GM12878 (cell line): ENCODE measurements at regions of chr10 and their contacts with region 1.

Region 1: GRCh38 chr10:45420453-45421192 is 46.6 kb downstream of the ALOX5 start:
- DNase-seq: peak; percentile 90
- ATAC-seq: peak; percentile 82
- H3K4me3 ChIP-seq: peak overlapping the region; percentile 72
- H3K27ac ChIP-seq: peak overlapping the region; percentile 93
- H3K4me1 ChIP-seq: peaks cover 34% of the 10 kb centered on the region
- H3K27me3 ChIP-seq: no peaks in the 10 kb centered on the region
- CTCF ChIP-seq: no peak
- EP300 ChIP-seq: peak; percentile 66 to 69; a peak in 2 of 4 replicates
- POLR2A ChIP-seq: peak; percentile 46; the same call in 1 of the 2 replicates
- RAD21 ChIP-seq: no peak

Region 2: GRCh38 chr10:45111509-45111908 is 309.1 kb before region 1 on chr10:
- CTCF ChIA-PET with region 1: no interaction called
- POLR2A ChIA-PET with region 1: no interaction called
- RAD21 ChIA-PET with region 1: no interaction called
- SMC1A ChIA-PET with region 1: no interaction called
- in situ Hi-C with region 1: no loop called
- intact Hi-C with region 1: no loop called
- DNase-seq: no peak
- ATAC-seq: no peak
- H3K4me3 ChIP-seq: no peak overlapping the region
- H3K27ac ChIP-seq: no peak overlapping the region
- H3K4me1 ChIP-seq: no peaks in the 10 kb centered on the region
- H3K27me3 ChIP-seq: no peaks in the 10 kb centered on the region
- CTCF ChIP-seq: no peak
- EP300 ChIP-seq: no peak
- POLR2A ChIP-seq: no peak
- RAD21 ChIP-seq: no peak

Region 3: DNA sequence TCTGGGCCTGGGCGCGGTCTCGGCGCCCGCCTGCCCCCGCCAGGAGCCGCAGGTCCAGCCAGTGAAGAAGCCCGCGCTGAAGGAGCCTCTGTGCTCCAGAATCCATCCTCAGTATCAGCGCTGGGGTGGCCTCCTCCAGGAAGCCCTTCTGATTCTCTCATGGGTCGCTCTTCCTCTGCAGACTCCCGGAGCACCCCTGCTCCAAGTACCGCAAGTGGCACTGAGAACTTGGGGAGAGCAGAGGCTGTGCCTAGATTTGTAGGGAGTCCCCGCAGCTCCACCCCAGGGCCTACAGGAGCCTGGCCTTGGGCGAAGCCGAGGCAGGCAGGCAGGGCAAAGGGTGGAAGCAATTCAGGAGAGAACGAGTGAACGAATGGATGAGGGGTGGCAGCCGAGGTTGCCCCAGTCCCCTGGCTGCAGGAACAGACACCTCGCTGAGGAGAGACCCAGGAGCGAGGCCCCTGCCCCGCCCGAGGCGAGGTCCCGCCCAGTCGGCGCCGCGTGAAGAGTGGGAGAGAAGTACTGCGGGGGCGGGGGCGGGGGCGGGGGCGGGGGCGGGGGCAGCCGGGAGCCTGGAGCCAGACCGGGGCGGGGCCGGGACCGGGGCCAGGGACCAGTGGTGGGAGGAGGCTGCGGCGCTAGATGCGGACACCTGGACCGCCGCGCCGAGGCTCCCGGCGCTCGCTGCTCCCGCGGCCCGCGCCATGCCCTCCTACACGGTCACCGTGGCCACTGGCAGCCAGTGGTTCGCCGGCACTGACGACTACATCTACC is 46.9 kb before region 1 on chr10 and contains the start of gene ALOX5:
- CTCF ChIA-PET with region 1: no interaction called
- POLR2A ChIA-PET with region 1: no interaction called
- RAD21 ChIA-PET with region 1: no interaction called
- SMC1A ChIA-PET with region 1: no interaction called
- in situ Hi-C with region 1: no loop called
- intact Hi-C with region 1: loop called (anchors 1 kb)
- DNase-seq: no peak
- ATAC-seq: peak; percentile 63
- H3K4me3 ChIP-seq: peak within 1 kb of the TSS; percentile 81
- H3K27ac ChIP-seq: peak within 1 kb of the TSS; percentile 74
- H3K4me1 ChIP-seq: peaks cover 33% of the 10 kb centered on the region
- H3K27me3 ChIP-seq: no peaks in the 10 kb centered on the region
- CTCF ChIP-seq: no peak
- EP300 ChIP-seq: no peak
- POLR2A ChIP-seq: peak; percentile 49
- RAD21 ChIP-seq: no peak
- polyA plus RNA-seq, gene ALOX5: 3.3 to 6.5 TPM

Region 4: GRCh38 chr10:45408421-45409319 is 12.0 kb before region 1 on chr10:
- CTCF ChIA-PET with region 1: no interaction called
- POLR2A ChIA-PET with region 1: no interaction called
- RAD21 ChIA-PET with region 1: no interaction called
- SMC1A ChIA-PET with region 1: no interaction called
- in situ Hi-C with region 1: no loop called
- intact Hi-C with region 1: no loop called
- DNase-seq: no peak
- ATAC-seq: no peak; the same call in 2 of the 3 replicates
- H3K4me3 ChIP-seq: no peak overlapping the region
- H3K27ac ChIP-seq: no peak overlapping the region
- H3K4me1 ChIP-seq: peaks cover 4% of the 10 kb centered on the region; the same call in 1 of the 2 replicates
- H3K27me3 ChIP-seq: peaks cover 0 to 1% of the 10 kb centered on the region in 2 experiments; a peak in 2 of 4 replicates
- CTCF ChIP-seq: no peak
- EP300 ChIP-seq: no peak
- POLR2A ChIP-seq: no peak
- RAD21 ChIP-seq: no peak

Region 5: GRCh38 chr10:45442662-45443061 is 22.0 kb after region 1 on chr10:
- CTCF ChIA-PET with region 1: no interaction called
- POLR2A ChIA-PET with region 1: no interaction called
- RAD21 ChIA-PET with region 1: no interaction called
- SMC1A ChIA-PET with region 1: no interaction called
- in situ Hi-C with region 1: no loop called
- intact Hi-C with region 1: no loop called
- DNase-seq: no peak
- ATAC-seq: peak; percentile 47
- H3K4me3 ChIP-seq: no peak overlapping the region
- H3K27ac ChIP-seq: no peak overlapping the region
- H3K4me1 ChIP-seq: no peaks in the 10 kb centered on the region
- H3K27me3 ChIP-seq: no peaks in the 10 kb centered on the region
- CTCF ChIP-seq: no peak
- EP300 ChIP-seq: no peak
- POLR2A ChIP-seq: 0 out of 2 replicates have a peak, but pooled peaks have one; percentile 17
- RAD21 ChIP-seq: no peak